Activated CD4-positive, alpha-beta T cell treated with anti-CD3 and anti-CD28 coated beads for 36 hours (primary cell): ENCODE measurements at regions of chr13 and their contacts with region 1.

Region 1: DNA sequence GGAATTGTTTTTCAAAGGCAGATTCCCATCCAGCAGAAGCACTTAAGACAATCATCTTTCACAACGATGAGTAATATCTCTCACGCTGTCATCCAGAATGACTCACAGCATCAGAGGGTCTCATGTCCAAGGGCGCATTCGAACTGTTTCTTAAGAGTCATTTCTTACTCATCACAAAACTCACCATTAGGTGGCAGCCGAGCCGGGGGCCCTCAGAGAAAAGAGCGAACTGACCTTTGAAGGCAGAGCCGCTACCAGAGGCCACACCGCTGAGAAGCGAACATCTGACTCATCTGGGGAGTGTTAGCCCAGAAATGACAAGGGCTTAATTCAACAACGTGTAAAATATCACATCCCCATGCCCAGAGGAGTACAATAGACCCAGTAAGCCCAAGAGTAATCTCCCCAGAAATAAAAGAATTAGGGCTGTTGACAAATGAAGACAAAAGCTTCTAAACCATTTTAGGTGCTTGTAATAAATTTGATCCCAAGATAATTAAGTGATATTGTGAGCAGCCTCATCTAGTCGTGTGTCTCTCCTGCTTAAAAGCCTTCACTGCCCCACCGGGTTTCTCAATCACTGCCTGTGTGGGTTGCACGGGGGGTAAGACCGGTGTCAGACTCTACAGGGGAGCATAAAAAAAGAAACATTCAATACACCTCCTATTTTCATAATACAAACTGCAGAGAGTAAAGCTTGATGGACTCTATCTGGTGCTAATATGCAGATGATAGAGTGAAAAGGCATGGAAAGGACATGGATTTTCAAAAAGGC is 96.2 kb downstream of the CYSLTR2 start:
- DNase-seq: peak; percentile 88
- ATAC-seq: peak; percentile 97
- H3K4me3 Mint-ChIP-seq: no peak overlapping the region
- H3K27ac Mint-ChIP-seq: peak overlapping the region; percentile 74
- H3K4me1 Mint-ChIP-seq: peaks cover 19% of the 10 kb centered on the region
- H3K27me3 Mint-ChIP-seq: no peaks in the 10 kb centered on the region

Region 2: DNA sequence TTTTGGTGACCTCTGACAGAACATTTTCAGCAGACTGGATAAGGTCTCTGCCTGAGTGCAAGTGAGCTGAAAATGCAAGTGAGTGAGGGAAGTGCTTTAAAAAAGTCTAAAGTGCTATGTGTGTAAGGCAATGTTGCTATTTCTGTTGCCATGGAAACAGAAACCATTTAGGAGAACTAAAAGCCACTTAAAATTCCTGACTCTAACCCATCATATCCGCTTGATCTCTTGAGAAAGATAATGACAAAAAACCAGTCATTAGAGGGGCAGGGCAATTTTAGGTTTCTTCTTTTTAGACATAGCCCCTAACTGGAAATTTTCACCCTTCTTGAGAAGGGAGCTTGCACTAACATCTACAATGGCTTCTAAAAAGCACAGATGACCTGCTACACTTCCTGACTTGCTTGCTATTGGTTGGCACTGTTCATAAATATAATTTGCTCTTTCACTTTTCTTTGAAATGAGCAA is 96.4 kb before region 1 on chr13 and contains the start of gene CYSLTR2:
- CTCF ChIA-PET with region 1: no interaction called
- POLR2A ChIA-PET with region 1: no interaction called
- intact Hi-C with region 1: loop called in 1 of 2 experiments (anchors 5 kb)
- DNase-seq: no peak
- ATAC-seq: peak; percentile 88
- H3K4me3 Mint-ChIP-seq: peak within 1 kb of the TSS; percentile 60
- H3K27ac Mint-ChIP-seq: peak within 1 kb of the TSS; percentile 90
- H3K4me1 Mint-ChIP-seq: peaks cover 44% of the 10 kb centered on the region
- H3K27me3 Mint-ChIP-seq: no peaks in the 10 kb centered on the region
- total RNA-seq, gene CYSLTR2: 2.2 to 2.5 TPM

Region 3: DNA sequence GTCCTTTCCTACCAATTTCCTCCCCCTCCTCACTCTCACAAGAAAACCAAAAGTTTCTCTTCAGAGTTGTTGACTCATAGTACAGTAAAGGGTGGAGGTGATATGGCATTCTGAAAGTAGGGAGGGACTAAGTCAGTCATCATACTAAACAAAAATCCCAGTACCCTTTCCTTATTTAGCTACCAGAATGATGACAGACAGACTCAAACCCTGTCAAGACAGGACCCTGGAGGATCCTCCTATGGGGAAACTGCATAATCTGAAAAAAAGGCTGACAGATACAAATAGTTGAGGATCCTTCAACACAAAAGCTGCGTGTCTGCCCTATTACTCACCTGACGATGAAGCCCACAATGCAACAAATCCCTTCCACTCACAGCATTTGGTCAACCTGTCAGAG is 40.7 kb before region 1 on chr13:
- CTCF ChIA-PET with region 1: no interaction called
- POLR2A ChIA-PET with region 1: no interaction called
- intact Hi-C with region 1: loop called in 1 of 2 experiments (anchors 1 kb)
- DNase-seq: no peak
- ATAC-seq: peak; percentile 92
- H3K4me3 Mint-ChIP-seq: no peak overlapping the region
- H3K27ac Mint-ChIP-seq: no peak overlapping the region
- H3K4me1 Mint-ChIP-seq: peaks cover 18% of the 10 kb centered on the region
- H3K27me3 Mint-ChIP-seq: no peaks in the 10 kb centered on the region

Region 4: DNA sequence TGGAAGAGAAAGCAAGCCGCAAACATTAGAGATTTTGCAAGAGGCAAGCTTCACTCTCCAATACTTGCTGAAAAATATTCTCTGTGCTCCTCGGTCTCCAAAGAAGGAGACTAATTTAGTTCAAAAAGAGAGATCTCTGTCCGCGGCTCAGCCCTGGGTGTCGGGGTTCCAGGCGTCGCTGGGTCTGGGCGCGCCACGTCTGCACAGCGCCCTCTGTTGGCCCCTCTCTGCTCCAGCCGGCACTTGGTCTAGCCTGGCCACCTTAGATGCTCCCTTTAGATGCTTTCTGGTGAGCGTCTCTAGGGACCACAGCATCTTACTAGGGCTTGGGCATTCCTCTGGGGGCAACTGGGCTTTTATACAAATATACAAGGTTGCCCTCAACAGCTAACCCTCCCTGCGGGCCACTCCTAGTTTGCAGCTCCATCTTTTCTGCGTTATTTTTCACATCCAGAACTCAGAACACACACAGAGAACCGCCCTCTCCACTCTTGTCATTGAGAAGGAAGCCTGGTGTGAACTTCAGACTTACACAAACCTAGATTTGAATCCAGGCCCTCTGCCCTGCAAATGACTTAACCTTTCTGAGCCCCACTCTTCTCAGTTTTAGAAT is 17.8 kb before region 1 on chr13:
- CTCF ChIA-PET with region 1: interaction called, 14 read pairs
- POLR2A ChIA-PET with region 1: no interaction called
- intact Hi-C with region 1: loop called in 1 of 2 experiments (anchors 1 kb)
- DNase-seq: peak; percentile 80
- ATAC-seq: peak; percentile 81
- H3K4me3 Mint-ChIP-seq: peak overlapping the region; percentile 37
- H3K27ac Mint-ChIP-seq: no peak overlapping the region
- H3K4me1 Mint-ChIP-seq: peaks cover 14% of the 10 kb centered on the region
- H3K27me3 Mint-ChIP-seq: no peaks in the 10 kb centered on the region

Region 5: GRCh38 chr13:48892053-48892690 is 142.3 kb after region 1 on chr13:
- CTCF ChIA-PET with region 1: no interaction called
- POLR2A ChIA-PET with region 1: no interaction called
- intact Hi-C with region 1: loop called in 1 of 2 experiments (anchors 5 kb)
- DNase-seq: no peak
- ATAC-seq: peak; percentile 97
- H3K4me3 Mint-ChIP-seq: no peak overlapping the region
- H3K27ac Mint-ChIP-seq: peak overlapping the region; percentile 51
- H3K4me1 Mint-ChIP-seq: peaks cover 34% of the 10 kb centered on the region
- H3K27me3 Mint-ChIP-seq: peaks cover 7% of the 10 kb centered on the region

Region 6: DNA sequence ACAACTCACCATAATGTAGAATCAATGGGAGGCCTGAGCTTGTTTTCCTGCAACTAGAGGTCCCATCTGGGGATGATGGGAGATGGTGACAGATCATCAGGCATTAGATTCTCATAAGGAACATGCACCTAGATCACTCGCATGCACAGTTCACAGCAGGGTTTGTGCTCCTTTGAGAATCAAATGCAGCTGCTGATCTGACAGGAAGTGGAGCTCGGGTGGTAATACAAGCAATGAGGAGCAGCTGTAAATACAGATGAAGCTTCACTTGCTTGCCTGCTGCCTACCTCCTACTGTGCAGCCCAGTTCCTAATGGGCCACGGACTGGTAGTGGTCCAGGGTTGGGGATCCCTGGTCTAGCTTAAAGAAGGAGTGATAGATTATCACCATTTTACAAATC is 1009.6 kb after region 1 on chr13:
- CTCF ChIA-PET with region 1: no interaction called
- POLR2A ChIA-PET with region 1: no interaction called
- intact Hi-C with region 1: no loop called
- DNase-seq: no peak
- ATAC-seq: no peak
- H3K4me3 Mint-ChIP-seq: no peak overlapping the region
- H3K27ac Mint-ChIP-seq: peak overlapping the region; percentile 19
- H3K4me1 Mint-ChIP-seq: peaks cover 31% of the 10 kb centered on the region
- H3K27me3 Mint-ChIP-seq: no peaks in the 10 kb centered on the region